Dorsolateral prefrontal cortex (tissue), 120 donors: ENCODE measurements at regions of chr19 and their contacts with region 1.

Region 1: DNA sequence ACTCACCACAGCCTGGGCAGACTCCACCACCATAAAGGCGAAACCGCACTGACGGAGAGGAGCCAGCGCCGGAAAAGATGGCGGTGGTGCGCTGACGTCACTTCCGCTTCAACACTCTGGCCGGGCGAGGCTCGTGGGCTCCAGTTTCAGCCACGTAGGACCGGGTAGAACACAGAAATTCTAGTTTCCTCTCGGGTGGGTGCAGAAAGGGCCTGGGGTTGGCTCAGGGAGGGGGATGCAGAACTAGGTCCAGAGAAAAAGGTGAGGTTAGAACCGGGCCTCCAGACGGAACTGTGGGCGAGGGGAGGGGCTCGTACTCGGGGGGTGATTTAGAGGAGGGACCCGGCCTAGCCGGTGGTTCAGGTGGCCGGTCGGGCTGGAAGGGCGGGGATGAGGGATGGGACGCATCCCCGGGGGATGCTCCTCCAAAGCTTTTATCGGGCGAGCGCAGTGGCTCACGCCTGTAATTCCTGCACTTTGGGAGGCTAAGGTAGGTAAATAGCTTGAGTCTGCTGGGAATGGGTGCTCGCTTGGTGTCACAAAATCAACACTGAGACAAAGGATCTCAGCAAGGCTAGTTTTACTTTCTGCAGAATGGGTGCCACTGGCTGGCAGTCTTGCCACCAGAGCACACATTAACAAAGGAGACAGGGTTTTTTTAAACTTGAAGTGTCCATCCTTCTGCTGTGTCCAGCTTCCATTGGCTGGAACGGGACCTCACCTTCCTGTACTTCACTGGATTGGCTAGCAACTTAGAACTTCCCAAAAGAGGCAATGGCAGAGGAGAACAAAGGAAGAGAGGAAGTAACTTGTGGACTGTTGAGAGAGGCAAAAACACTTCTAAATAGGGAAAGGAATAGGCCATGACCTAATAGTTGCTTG is at the start of gene ZNF561:
- DNase-seq: peak; percentile 79 to 90 (median 86)
- H3K4me3 ChIP-seq: peak within 1 kb of the TSS; percentile 55 to 99 (median 93)
- H3K27ac ChIP-seq: peak within 1 kb of the TSS; percentile 51 to 99 (median 95)
- H3K27me3 ChIP-seq: no peaks in the 10 kb centered on the region
- CTCF ChIP-seq: peak in 19 of 56 donors; percentile 5 to 47 (median 21)
- total RNA-seq, gene ZNF561: 15.0 to 38.5 (median 25.3) TPM

Region 2: DNA sequence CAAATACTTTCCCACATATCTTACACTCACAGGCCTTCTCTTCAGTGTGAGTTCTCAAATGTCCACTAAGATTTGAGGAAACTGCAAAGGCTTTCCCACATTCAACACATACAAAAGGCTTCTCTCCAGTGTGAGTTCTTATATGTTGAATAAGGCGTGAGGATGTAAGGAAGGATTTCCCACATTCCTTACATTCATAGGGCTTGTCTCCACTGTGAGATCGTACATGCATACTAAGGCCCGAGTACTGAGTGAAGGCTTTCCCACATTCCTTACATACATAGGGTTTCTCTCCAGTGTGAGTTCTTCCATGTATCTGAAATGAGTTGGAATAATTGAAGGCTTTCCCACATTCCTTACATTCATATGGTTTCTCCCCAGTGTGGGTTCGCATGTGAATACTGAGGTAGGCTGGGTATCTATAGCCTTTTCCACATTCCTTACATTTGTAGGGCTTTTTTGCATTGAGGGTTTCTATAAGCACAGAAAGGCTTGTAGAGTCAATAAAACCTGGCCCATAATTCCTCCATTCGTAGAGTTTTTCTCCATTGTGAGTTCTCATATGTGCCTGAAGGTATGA is 92.5 kb before region 1 on chr19:
- intact Hi-C with region 1: no loop called
- DNase-seq: no peak
- H3K4me3 ChIP-seq: no peak overlapping the region
- H3K27ac ChIP-seq: no peak overlapping the region
- H3K27me3 ChIP-seq: no peaks in the 10 kb centered on the region
- CTCF ChIP-seq: no peak

Region 3: GRCh38 chr19:9584073-9584833 is 37.1 kb before region 1 on chr19 and contains the start of gene ZNF121:
- intact Hi-C with region 1: loop called in 1 of 2 experiments (anchors 5 kb)
- DNase-seq: peak; percentile 76 to 94 (median 86)
- H3K4me3 ChIP-seq: peak within 1 kb of the TSS; percentile 58 to 99 (median 88)
- H3K27ac ChIP-seq: peak within 1 kb of the TSS; percentile 51 to 98 (median 93)
- H3K27me3 ChIP-seq: peaks cover 0 to 10% (median 0%) of the 10 kb centered on the region in 45 donors
- CTCF ChIP-seq: peak in 30 of 56 donors; percentile 11 to 56 (median 27)
- total RNA-seq, gene ZNF121: 16.5 to 34.9 (median 23.7) TPM

Region 4: DNA sequence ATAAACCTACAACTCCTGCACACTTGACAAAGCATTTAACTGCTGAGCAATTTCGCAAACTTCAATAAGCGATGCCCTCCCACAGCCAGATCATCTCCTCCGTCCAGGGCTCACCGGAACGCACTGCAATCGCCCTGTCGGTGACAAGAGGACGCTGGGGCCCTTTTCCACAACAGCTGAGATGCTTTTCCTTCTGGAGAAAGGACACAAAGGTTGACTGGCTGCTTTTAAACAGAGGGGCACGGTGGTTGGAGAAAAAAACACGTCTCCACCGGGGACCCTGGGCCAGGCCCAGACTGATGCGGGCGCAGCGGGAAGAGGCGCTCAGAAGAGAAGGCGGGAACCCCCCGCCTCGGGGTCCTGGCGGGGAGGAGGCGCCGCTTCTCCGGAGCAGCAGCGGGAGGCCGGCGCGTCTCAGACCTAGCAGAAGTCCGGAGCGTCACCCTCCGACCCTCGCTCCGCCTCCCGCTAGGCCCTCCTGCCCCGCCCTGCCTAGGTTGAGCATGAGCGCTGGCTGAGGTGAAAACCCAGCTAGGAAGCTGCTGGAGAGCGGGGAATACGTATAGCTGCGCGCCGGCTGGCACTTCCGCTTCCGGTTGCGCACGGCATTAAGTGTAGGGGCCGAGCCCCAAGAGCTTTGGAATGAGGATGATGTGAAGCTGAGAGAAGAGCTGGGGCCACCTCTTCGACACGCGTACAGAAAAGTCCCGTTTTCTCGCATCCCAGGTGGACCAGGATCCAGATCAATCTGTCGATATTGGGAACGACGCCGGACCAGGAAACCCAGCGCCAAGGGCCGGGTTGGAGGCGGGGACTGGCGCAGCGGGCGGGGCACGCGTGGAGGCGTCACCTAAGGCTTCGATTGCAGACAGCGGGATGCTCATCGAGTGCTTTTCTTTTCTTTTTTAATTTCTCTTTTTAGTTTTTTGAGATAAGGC is 147.0 kb after region 1 on chr19 and contains the start of gene ZNF846:
- intact Hi-C with region 1: loop called in 1 of 2 experiments (anchors 1 kb)
- DNase-seq: peak; percentile 85 to 95 (median 92)
- H3K4me3 ChIP-seq: peak within 1 kb of the TSS; percentile 63 to 97 (median 87)
- H3K27ac ChIP-seq: peak within 1 kb of the TSS; percentile 66 to 98 (median 93)
- H3K27me3 ChIP-seq: no peaks in the 10 kb centered on the region
- CTCF ChIP-seq: peak in 27 of 56 donors; percentile 3 to 51 (median 18)
- total RNA-seq, gene ZNF846: 22.4 to 55.4 (median 33.7) TPM